Sciatic nerve (tissue), 2 donors: ENCODE measurements at regions of chr1 and their contacts with region 1.

Region 1: DNA sequence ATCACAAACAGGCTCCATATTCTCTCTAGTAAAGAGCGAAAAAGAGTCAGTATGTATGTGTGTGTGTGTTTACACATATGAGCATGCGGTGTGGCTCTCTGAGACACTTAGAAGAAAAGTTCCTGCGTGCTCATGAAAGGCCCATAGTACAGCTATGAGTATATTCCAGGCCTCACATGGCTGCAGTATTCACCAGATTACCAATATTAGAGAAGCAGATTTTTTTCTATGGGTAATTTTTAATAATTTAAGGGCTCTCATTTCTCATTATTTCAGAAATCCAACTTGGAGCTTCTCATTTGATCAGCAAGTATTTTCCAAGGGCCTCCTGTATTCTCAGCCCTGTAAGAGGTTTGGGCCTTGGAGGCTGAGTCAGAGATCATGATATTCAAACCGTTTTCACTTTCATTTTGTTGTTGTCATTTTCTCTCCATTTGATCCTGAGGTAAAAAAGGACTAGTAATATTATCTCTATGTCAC is 232.9 kb upstream of the SGIP1 start:
- DNase-seq: no peak
- ATAC-seq: peak; percentile 70

Region 2: GRCh38 chr1:64744492-64745180 is 1556.4 kb before region 1 on chr1 and contains the start of gene RAVER2:
- intact Hi-C with region 1: no loop called
- DNase-seq: peak; percentile 78
- ATAC-seq: peak; percentile 84
- total RNA-seq, gene RAVER2: 6.5 TPM

Region 3: DNA sequence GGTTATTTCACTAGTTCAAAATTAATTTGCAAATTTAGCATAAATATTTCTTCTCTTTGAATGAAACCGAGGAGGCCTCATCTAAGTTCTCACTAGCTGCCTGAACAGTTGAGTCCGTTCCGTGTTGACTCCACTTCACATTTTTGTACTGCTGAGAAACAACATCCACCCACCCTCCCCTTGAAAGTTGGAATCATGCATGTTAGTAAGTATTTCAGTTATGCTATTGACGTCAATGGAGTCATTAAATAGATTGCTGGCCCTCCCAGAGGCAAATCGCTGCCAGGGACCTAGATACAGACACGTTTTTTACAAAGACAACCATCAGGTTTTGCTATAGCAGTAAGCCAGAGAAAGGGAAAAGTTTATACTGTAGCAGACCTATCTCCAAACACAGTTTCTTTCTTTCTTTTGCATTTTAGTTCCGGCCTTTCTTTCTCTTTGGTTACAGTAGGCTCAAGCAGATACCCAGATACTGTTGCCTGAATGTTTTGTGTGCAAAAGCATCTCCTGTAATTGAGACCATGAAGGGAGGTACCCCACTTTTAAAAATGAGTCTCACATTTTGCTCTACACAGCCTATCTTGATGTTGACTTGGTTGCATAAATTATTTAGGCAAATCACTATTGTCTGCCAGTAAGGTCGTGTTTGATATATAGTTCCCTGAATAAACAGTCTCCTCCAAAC is 29.7 kb before region 1 on chr1:
- intact Hi-C with region 1: no loop called
- DNase-seq: peak; percentile 85
- ATAC-seq: peak; percentile 95

Region 4: GRCh38 chr1:66327588-66327987 is 26.6 kb after region 1 on chr1:
- intact Hi-C with region 1: loop called (anchors 1 kb)
- DNase-seq: no peak
- ATAC-seq: no peak

Region 5: DNA sequence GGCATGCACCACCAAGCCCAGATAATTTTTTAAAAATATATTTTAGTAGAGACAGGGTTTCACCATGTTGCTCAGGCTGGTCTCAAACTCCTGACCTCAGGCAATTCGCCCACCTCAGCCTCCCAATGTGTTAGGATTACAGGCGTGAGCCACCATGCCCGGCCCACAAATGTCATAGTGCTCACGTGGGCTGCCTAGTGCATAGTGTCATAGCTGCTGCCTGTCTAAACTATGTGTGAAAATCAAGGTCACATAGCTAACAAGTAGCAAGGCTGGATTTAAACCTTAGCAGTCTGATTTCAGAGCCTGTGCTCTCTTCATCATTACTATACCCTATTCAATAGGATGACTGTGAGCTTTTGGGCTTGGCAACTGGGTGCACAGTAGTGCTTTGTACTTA is 823.4 kb after region 1 on chr1:
- intact Hi-C with region 1: loop called (anchors 5 kb)
- DNase-seq: no peak
- ATAC-seq: no peak